Activated B cell treated with CpG ODN at 0.5 μM for 24 hours (primary cell): ENCODE measurements at regions of chr16 and their contacts with region 1.

Region 1: DNA sequence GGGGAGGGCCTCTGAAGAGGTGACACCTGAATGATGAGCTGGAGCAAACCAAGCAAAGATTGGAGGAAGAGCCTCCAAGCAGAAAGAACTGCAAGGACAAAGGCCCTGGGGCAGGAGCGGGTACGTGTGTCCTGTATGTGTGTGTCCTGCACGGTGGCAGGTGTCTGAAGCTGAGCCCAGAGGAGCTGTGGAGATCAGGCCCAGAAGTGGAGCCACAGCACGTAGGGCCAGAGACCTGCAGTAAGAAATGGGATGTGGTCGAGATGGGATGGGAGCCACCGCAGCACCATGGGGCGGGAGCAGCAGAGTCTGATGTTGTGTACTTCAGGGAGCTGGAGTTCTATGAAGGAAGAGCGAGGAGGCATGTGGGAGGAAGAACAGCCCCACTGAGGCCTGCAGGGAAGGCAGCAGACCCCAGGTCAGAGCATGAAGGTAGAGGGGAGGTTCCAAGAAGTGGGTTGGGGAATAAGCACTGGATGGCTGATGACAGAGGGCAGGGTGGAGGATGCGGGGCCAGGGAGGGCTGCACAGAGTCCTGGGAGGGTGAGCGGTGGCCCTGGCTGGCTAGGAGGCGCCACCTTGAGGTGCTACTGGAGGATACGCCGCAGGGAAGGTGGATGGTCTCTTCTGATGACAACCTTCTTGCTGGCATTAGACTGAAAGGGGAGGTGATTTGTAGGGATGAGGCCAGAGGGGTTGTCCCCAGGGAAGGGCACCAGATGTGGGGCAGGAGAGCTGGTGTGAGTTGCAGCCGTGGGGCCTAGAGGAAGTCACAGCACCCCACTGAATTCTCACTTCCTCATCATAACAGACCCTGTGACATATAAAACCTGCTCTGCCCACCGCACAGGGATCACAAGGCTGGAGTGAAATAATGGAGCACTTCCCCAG is 10.6 kb upstream of the CETP start:
- DNase-seq: peak; percentile 68
- ATAC-seq: peak; percentile 90
- H3K4me3 Mint-ChIP-seq: peak overlapping the region; percentile 60
- H3K27ac Mint-ChIP-seq: peak overlapping the region; percentile 74
- H3K4me1 Mint-ChIP-seq: peaks cover 48% of the 10 kb centered on the region
- H3K27me3 Mint-ChIP-seq: no peaks in the 10 kb centered on the region
- CTCF ChIP-seq: no peak

Region 2: GRCh38 chr16:56911771-56912571 is 39.2 kb before region 1 on chr16:
- CTCF ChIA-PET with region 1: no interaction called
- POLR2A ChIA-PET with region 1: interaction called, 795 read pairs
- intact Hi-C with region 1: loop called (anchors 1 kb)
- DNase-seq: peak; percentile 70
- ATAC-seq: peak; percentile 81
- H3K4me3 Mint-ChIP-seq: peak overlapping the region; percentile 64
- H3K27ac Mint-ChIP-seq: peak overlapping the region; percentile 96
- H3K4me1 Mint-ChIP-seq: peaks cover 79% of the 10 kb centered on the region
- H3K27me3 Mint-ChIP-seq: no peaks in the 10 kb centered on the region
- CTCF ChIP-seq: no peak

Region 3: GRCh38 chr16:56938422-56939156 is 12.5 kb before region 1 on chr16:
- CTCF ChIA-PET with region 1: interaction called, 9 read pairs
- POLR2A ChIA-PET with region 1: interaction called, 157 read pairs
- intact Hi-C with region 1: no loop called
- DNase-seq: no peak
- ATAC-seq: no peak
- H3K4me3 Mint-ChIP-seq: peak overlapping the region; percentile 81
- H3K27ac Mint-ChIP-seq: peak overlapping the region; percentile 83
- H3K4me1 Mint-ChIP-seq: peaks cover 87% of the 10 kb centered on the region
- H3K27me3 Mint-ChIP-seq: no peaks in the 10 kb centered on the region
- CTCF ChIP-seq: no peak

Region 4: DNA sequence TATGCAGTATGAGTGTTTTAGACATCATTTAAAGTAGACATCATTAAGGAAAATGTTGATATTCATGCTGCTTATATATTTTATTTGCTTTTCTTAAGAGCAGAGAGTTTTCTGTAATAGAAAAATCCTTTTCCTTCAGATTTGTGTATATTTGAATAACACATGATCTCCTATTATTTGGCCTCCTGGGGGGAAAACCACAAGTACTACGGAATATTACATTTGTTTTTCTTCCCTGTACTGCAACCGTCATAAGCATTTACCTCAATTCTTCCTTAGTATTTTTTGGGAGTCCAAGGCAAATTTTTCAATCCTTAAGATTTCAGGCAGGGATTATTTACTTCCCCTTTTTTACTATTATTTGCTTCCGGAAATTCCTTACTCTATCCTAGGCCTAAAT is 241.0 kb after region 1 on chr16:
- CTCF ChIA-PET with region 1: no interaction called
- POLR2A ChIA-PET with region 1: no interaction called
- intact Hi-C with region 1: no loop called
- DNase-seq: no peak
- ATAC-seq: no peak
- H3K4me3 Mint-ChIP-seq: no peak overlapping the region
- H3K27ac Mint-ChIP-seq: no peak overlapping the region
- H3K4me1 Mint-ChIP-seq: peaks cover 25% of the 10 kb centered on the region
- H3K27me3 Mint-ChIP-seq: no peaks in the 10 kb centered on the region
- CTCF ChIP-seq: no peak